ENCODE measurements at regions of chr7 and their contacts with region 1.

Region 1: GRCh38 chr7:100478966-100479665 is at the start of gene TSC22D4:
- DNase-seq: peak; percentile 95
- H3K4me3 Mint-ChIP-seq: peak within 1 kb of the TSS; percentile 95
- H3K27ac Mint-ChIP-seq: peak within 1 kb of the TSS; percentile 95
- H3K4me1 Mint-ChIP-seq: peaks cover 40% of the 10 kb centered on the region
- H3K27me3 Mint-ChIP-seq: no peaks in the 10 kb centered on the region
- total RNA-seq, gene TSC22D4: 87.8 to 89.5 TPM

Region 2: GRCh38 chr7:100435401-100436304 is 43.5 kb before region 1 on chr7:
- CTCF ChIA-PET with region 1: no interaction called
- POLR2A ChIA-PET with region 1: interaction called, 4 read pairs
- intact Hi-C with region 1: loop called (anchors 1 kb)
- DNase-seq: peak; percentile 62
- H3K4me3 Mint-ChIP-seq: peak overlapping the region; percentile 91
- H3K27ac Mint-ChIP-seq: peak overlapping the region; percentile 96
- H3K4me1 Mint-ChIP-seq: peaks cover 44% of the 10 kb centered on the region
- H3K27me3 Mint-ChIP-seq: no peaks in the 10 kb centered on the region

Region 3: DNA sequence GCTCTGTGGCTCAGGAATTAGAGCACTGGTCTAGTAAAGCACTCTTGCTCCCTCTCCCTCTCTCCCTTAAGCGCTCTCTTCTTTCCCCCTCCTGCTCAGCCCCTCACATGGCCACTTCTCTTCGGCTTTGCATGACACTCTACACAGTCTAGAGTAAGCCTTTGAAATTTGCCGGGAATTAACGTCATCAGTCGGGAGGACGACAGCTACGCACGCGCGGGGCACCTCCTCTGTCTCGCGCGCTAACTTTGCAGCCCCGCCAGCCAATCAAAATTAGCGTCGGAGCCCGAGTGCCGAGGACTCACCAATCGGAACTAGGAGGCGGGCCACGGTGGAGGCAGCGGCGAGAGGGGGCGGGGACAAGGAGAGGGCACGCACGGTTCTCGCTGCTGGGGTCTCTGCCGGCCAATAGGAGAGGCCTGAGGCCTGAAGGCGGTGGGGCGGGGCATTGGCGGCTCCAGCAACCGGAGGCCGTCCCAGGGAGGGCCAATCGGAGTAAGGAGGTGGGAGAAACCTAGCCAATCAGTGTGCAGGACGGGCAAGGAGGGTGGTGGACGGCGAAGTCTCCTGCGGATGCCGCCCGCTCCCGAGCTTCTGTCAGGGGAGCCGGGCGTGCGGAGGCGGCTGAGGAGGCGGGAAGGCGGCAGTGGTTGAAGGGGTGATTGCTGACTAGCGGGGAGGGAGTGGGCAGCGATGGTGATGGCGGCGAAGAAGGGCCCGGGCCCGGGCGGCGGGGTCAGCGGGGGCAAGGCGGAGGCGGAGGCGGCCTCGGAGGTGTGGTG is 59.7 kb after region 1 on chr7 and contains the start of gene AGFG2:
- CTCF ChIA-PET with region 1: interaction called, 10 read pairs
- POLR2A ChIA-PET with region 1: interaction called, 15 read pairs
- intact Hi-C with region 1: loop called (anchors 1 kb)
- DNase-seq: peak; percentile 100
- H3K4me3 Mint-ChIP-seq: peak within 1 kb of the TSS; percentile 95
- H3K27ac Mint-ChIP-seq: peak within 1 kb of the TSS; percentile 90
- H3K4me1 Mint-ChIP-seq: peaks cover 41% of the 10 kb centered on the region
- H3K27me3 Mint-ChIP-seq: no peaks in the 10 kb centered on the region
- total RNA-seq, gene AGFG2: 60.9 to 62.5 TPM

Region 4: DNA sequence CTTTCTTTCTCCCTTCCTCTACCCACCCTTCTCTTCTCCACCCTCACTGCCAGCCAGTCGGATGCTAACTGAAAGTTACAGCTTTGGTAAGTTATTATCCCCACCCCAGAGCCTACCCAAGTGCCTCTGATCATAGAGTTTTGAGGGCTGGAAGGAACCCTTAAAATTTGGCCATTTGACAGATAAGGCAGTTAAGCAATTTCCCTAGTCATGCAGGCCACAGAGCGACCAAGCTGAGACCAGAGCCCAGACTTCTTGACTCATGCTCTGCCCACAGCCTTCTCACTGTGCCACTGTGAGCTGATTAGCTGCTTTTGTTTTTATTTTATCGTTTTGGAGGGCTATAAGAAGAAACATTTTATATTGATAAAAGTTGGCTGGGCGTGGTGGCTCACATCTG is 77.4 kb after region 1 on chr7:
- CTCF ChIA-PET with region 1: interaction called, 104 read pairs
- POLR2A ChIA-PET with region 1: no interaction called
- intact Hi-C with region 1: no loop called
- DNase-seq: no peak
- H3K4me3 Mint-ChIP-seq: no peak overlapping the region
- H3K27ac Mint-ChIP-seq: no peak overlapping the region
- H3K4me1 Mint-ChIP-seq: peaks cover 11% of the 10 kb centered on the region
- H3K27me3 Mint-ChIP-seq: no peaks in the 10 kb centered on the region

Region 5: DNA sequence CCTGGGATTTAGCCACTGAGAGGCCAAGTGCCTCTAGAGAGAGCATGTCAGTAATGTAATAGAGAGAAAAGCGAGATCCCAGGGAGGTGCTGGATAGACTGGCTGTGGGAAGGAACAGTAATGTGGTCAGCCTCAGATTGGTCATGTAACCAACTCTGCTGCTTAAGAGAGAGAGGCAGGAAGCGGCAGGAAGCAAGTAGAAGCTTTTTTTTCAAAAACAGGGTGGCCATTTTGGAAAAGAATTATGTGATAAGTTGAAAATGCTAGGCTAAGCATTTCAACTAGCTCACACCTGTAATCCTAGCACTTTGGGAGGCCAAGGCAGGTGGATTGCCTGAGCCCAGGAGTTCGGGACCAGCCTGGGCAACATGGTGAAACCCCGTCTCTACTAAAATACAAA is 119.3 kb after region 1 on chr7:
- CTCF ChIA-PET with region 1: no interaction called
- POLR2A ChIA-PET with region 1: no interaction called
- intact Hi-C with region 1: no loop called
- DNase-seq: no peak
- H3K4me3 Mint-ChIP-seq: no peak overlapping the region
- H3K27ac Mint-ChIP-seq: no peak overlapping the region
- H3K4me1 Mint-ChIP-seq: peaks cover 3% of the 10 kb centered on the region
- H3K27me3 Mint-ChIP-seq: no peaks in the 10 kb centered on the region

Region 6: GRCh38 chr7:100673300-100673941 is 194.3 kb after region 1 on chr7 and contains the start of gene GNB2:
- CTCF ChIA-PET with region 1: interaction called, 3 read pairs
- POLR2A ChIA-PET with region 1: no interaction called
- intact Hi-C with region 1: loop called (anchors 1 kb)
- DNase-seq: peak; percentile 100
- H3K4me3 Mint-ChIP-seq: peak within 1 kb of the TSS; percentile 95
- H3K27ac Mint-ChIP-seq: peak within 1 kb of the TSS; percentile 97
- H3K4me1 Mint-ChIP-seq: peaks cover 8% of the 10 kb centered on the region
- H3K27me3 Mint-ChIP-seq: no peaks in the 10 kb centered on the region
- total RNA-seq, gene GNB2: 228 to 231 TPM

Measured in activated CD4-positive, alpha-beta memory T cell treated with anti-CD3 and anti-CD28 coated beads for 36 hours (primary cell).